ENCODE measurements at regions of chr19 and their contacts with region 1.

Region 1: DNA sequence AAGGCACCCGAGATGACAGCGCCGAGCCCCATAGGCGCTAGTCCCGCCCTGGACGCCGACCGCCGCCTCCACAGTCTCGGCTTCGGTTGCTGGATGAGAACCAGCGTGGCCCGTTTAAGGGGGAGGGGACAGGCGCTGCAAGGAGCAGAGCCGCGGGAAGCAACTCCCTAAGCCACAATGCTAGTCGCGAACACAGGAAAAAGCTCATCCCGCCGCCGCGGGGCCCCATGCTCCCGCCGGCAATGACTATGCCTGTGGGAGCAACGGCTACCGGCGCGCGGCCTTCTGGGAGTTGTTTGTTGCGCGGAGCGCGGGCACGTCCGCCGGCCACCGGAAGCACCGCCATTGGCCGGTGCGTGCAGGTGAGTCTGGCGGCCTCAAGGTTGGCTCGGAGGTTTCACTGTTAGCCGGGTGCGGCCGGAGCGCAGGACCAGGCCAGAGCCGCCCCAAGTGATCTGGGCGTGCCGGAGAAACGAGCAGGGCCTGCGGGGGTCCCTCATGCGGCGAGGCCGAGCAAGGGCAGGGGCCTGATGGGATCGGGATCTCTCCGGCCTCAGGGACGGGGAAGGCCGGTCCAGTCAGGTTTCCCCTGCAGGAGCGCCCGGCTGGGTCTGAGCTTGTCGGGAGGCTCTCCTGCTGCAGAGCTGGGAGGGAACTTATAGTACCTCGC is at the start of gene ZNF544:
- DNase-seq: peak; percentile 84
- H3K4me3 ChIP-seq: peak within 1 kb of the TSS; percentile 53 to 66 (median 61)
- H3K27ac ChIP-seq: peak within 1 kb of the TSS; percentile 42
- H3K4me1 ChIP-seq: peaks cover 10% of the 10 kb centered on the region
- H3K27me3 ChIP-seq: no peaks in the 10 kb centered on the region
- CTCF ChIP-seq: peak; percentile 6 to 40
- POLR2A ChIP-seq: peak; percentile 92
- total RNA-seq, gene ZNF544: 39.3 and 45.4 TPM in 2 replicates

Region 2: DNA sequence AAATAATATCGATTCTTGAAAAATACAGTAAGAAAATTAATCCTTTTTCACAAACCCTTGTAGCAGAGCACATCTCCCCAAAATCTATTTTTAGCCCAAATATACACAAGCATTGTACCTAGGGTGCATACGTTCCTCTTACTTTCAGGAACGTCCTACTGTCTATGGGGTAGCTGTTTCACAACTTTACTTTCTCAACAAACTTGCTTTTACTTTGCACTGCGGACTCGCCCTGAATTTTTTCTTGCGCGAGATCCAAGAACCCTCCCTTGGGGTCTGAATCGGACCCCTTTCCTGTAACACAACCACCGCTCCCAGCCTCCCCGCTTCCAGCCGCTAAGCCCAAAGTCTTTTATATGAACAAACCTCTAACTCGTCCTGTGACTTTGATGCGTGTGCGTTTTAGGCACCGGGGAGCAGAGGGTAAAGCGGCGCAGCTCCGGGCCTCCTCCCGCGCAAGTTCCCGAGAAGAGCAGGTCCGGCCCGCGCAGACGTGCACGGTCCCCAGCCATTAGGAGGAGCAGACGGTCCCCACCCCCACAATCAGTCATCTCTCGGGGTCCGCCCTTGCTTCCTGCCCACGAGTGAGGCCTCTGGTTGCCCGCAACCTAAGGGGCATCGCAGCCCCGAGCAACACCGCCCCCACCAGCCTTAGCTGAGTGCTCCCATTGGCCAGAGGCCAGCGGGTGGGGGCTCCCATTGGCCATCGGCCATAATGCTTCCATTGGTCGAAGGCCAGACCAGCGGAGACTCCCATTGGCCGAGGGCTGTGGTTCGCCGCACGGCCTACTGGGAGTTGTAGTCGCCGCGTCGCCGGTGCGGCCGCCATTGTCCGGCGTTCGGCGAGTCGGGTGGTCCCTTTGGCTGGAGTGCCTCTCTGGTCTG is 49.7 kb after region 1 on chr19 and contains the start of gene ZNF8:
- CTCF ChIA-PET with region 1: no interaction called
- POLR2A ChIA-PET with region 1: no interaction called
- dilution Hi-C with region 1: no loop called
- intact Hi-C with region 1: loop called (anchors 1 kb)
- DNase-seq: peak; percentile 99
- H3K4me3 ChIP-seq: peak within 1 kb of the TSS; percentile 67 to 72 (median 70)
- H3K27ac ChIP-seq: peak within 1 kb of the TSS; percentile 76
- H3K4me1 ChIP-seq: peaks cover 8% of the 10 kb centered on the region
- H3K27me3 ChIP-seq: no peaks in the 10 kb centered on the region
- CTCF ChIP-seq: peak in 1 of 2 donors; percentile 22
- POLR2A ChIP-seq: peak; percentile 68
- total RNA-seq, gene ZNF8: 6.3 and 6.8 TPM in 2 replicates

Region 3: DNA sequence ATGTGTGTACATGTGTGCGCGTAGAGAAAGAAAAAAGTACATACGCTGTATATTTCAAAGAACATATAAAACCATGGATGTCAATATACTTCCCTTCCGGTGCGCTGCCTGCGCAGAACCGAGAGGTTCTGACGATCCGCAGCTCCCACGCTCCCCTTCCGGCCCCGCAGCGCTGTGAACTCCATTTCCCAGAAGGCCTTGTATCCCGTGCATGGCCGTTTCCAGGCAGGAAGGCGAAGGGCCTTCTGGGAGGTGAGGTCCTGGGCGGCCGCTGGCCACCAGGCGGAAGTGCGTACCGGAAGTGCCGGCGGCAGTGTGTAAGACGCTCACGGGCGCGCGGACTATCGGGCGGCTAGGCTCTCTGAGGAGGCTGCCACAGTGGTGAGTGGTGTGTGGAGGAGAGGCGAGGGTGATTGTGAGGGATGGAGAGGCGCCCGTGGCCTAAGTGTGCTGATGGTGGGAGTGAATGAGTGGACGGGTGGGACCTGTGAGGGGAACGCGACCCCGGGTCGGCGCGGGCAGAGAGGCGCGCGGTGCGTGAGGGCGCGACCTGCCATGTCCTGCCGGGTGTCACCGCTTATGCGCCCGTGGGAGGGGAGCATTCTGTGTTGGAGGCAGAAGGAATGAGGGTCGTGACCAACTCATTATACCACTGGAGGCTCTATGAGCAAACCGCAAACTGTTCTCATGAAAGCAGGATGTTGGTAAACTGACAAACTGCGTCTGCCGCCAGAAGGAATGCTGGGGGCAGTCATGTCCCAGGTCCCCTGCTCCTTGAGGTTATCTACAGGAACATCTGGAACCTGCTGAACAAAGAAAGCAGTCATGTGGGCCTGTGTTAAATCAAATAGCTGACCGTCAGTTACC is 76.6 kb after region 1 on chr19 and contains the start of gene ERVK3-1:
- CTCF ChIA-PET with region 1: interaction called, 11 read pairs
- POLR2A ChIA-PET with region 1: interaction called, 5 read pairs
- dilution Hi-C with region 1: no loop called
- intact Hi-C with region 1: loop called (anchors 1 kb)
- DNase-seq: peak; percentile 98
- H3K4me3 ChIP-seq: peak within 1 kb of the TSS; percentile 44 to 72 (median 49)
- H3K27ac ChIP-seq: peak within 1 kb of the TSS; percentile 95
- H3K4me1 ChIP-seq: peaks cover 9% of the 10 kb centered on the region
- H3K27me3 ChIP-seq: no peaks in the 10 kb centered on the region
- CTCF ChIP-seq: no peak
- POLR2A ChIP-seq: peak; percentile 92
- total RNA-seq, gene ERVK3-1: 25.8 and 28.4 TPM in 2 replicates

Region 4: DNA sequence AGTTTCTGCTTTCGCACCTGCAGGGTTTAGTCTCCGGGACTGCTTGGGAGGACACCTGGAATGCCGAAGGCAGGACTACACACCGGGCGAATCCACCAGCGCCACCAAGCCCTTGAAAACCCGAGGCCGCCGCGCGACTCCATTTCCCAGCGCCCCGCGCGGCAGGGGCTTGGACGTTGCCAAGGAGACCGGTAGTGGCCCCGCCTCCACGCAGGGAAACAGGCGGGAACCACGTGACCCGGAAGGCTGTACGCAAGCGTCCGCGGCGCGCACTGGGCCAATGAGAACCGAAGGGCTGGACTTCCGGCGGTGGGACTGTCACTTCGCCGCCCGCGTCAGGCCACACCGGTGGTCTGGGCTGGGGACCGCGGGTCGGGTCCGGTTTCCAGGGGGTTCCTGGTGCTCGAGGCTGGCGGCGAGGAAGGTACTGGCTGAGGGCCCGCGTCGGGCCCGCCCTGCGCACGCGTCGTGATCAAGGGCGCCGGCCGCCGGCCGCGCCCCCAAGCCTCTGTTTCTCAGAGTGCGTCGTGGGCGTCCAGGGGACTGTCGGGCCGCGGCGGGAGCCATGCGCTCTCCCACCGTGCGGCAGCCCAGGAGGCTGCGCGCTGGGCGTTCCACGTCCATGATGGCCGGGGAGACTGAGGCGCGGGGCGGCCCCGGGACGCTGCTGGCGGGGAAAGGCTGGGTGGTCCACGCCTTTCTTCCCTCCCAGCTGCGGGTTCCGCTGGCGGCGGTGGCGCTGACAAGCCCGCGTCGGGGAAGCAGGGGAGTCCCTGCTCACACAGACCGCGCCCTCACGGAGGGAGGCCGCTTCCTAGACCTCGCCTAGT is 238.3 kb after region 1 on chr19 and contains the start of gene ZNF324:
- CTCF ChIA-PET with region 1: no interaction called
- POLR2A ChIA-PET with region 1: no interaction called
- dilution Hi-C with region 1: no loop called
- intact Hi-C with region 1: loop called (anchors 2 kb)
- DNase-seq: peak; percentile 96
- H3K4me3 ChIP-seq: peak within 1 kb of the TSS; percentile 62 to 76 (median 72)
- H3K27ac ChIP-seq: peak within 1 kb of the TSS; percentile 45
- H3K4me1 ChIP-seq: peaks cover 3% of the 10 kb centered on the region
- H3K27me3 ChIP-seq: no peaks in the 10 kb centered on the region
- CTCF ChIP-seq: no peak
- POLR2A ChIP-seq: peak; percentile 76
- total RNA-seq, gene ZNF324: 7.1 and 8.7 TPM in 2 replicates

Measured in endothelial cell of umbilical vein (primary cell).